T-cell (primary cell): ENCODE measurements at regions of chr20 and their contacts with region 1.

Region 1: GRCh38 chr20:5001174-5002076 is at the start of gene SLC23A2:
- DNase-seq: peak; percentile 14 to 79 (median 52)
- ATAC-seq: peak; percentile 88 to 93 (median 92)
- H3K4me3 ChIP-seq: peak within 1 kb of the TSS; percentile 65 to 88
- H3K4me3 Mint-ChIP-seq: peak within 1 kb of the TSS; percentile 93 to 96 (median 94)
- H3K27ac ChIP-seq: peak within 1 kb of the TSS; percentile 25
- H3K27ac Mint-ChIP-seq: peak within 1 kb of the TSS; percentile 83 to 84
- H3K4me1 ChIP-seq: peaks cover 8 to 27% of the 10 kb centered on the region in 2 experiments
- H3K4me1 Mint-ChIP-seq: peaks cover 36 to 47% (median 39%) of the 10 kb centered on the region in 3 donors
- H3K27me3 ChIP-seq: no peaks in the 10 kb centered on the region
- H3K27me3 Mint-ChIP-seq: no peaks in the 10 kb centered on the region
- total RNA-seq, gene SLC23A2: 17.7 to 22.9 (median 20.9) TPM

Region 2: DNA sequence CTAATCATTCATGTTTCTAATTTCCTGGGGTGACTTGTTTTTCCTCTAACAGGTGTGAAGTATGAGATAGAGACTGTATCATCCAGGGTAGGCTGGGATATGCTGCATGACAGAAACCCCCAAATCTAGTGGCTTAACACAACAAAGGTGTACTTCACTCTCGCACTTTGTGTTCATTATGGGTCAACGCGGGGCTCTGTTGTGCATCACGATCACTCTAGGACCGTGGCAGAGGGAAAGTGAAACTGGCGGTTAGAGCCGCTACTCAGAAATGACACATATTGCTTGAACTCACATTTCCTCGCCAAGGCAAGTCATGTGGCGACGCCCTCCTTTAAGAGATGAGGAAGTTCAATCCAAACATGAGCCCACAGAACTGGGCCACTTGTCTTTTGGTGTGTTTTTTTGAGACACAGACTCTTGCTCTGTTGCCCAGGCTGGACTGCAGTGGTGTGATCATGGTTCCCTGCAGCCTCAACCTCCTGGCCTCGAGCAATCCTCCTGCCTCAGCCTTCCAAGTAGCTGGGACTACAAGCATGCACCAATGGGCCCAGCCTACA is 77.1 kb after region 1 on chr20:
- CTCF ChIA-PET with region 1: interaction called in 1 of 2 experiments, 13 read pairs
- POLR2A ChIA-PET with region 1: no interaction called
- DNase-seq: peak; percentile 45 to 90 (median 75)
- ATAC-seq: peak; percentile 96 to 98 (median 98)
- H3K4me3 ChIP-seq: peak overlapping the region; percentile 47 to 52
- H3K4me3 Mint-ChIP-seq: peak overlapping the region; percentile 74 to 79 (median 79)
- H3K27ac ChIP-seq: peak overlapping the region; percentile 98
- H3K27ac Mint-ChIP-seq: peak overlapping the region; percentile 97 to 99
- H3K4me1 ChIP-seq: peaks cover 12 to 31% of the 10 kb centered on the region in 2 experiments
- H3K4me1 Mint-ChIP-seq: peaks cover 33 to 40% (median 35%) of the 10 kb centered on the region in 3 donors
- H3K27me3 ChIP-seq: no peaks in the 10 kb centered on the region
- H3K27me3 Mint-ChIP-seq: no peaks in the 10 kb centered on the region

Region 3: GRCh38 chr20:5090191-5090590 is 88.8 kb after region 1 on chr20:
- CTCF ChIA-PET with region 1: no interaction called
- POLR2A ChIA-PET with region 1: interaction called in 1 of 2 experiments, 10 read pairs
- DNase-seq: peak in 6 of 35 experiments; percentile 4 to 39 (median 14)
- ATAC-seq: peak in 3 of 4 experiments; percentile 36 to 79 (median 53)
- H3K4me3 ChIP-seq: no peak overlapping the region
- H3K4me3 Mint-ChIP-seq: peak overlapping the region in 1 of 3 donors; percentile 25
- H3K27ac ChIP-seq: peak overlapping the region; percentile 47
- H3K27ac Mint-ChIP-seq: peak overlapping the region; percentile 83 to 84
- H3K4me1 ChIP-seq: peaks cover 4 to 9% of the 10 kb centered on the region in 2 experiments
- H3K4me1 Mint-ChIP-seq: peaks cover 15 to 19% (median 16%) of the 10 kb centered on the region in 3 donors
- H3K27me3 ChIP-seq: no peaks in the 10 kb centered on the region
- H3K27me3 Mint-ChIP-seq: no peaks in the 10 kb centered on the region